A549 (cell line): ENCODE measurements at regions of chr9 and their contacts with region 1.

Region 1: GRCh38 chr9:77488439-77489126 is 159.5 kb downstream of the GNA14 start:
- DNase-seq: peak in 1 of 2 experiments; percentile 25
- ATAC-seq: peak; percentile 68 to 74; a peak in 5 of 6 replicates
- H3K4me3 ChIP-seq: no peak overlapping the region
- H3K27ac ChIP-seq: no peak overlapping the region
- H3K4me1 ChIP-seq: no peaks in the 10 kb centered on the region
- CTCF ChIP-seq: peak; percentile 50
- EP300 ChIP-seq: no peak
- POLR2A ChIP-seq: no peak
- RAD21 ChIP-seq: peak; percentile 57 to 65

Region 2: GRCh38 chr9:77498891-77499290 is 10.3 kb after region 1 on chr9:
- CTCF ChIA-PET with region 1: interaction called, 11 read pairs
- POLR2A ChIA-PET with region 1: no interaction called
- DNase-seq: no peak
- ATAC-seq: no peak
- H3K4me3 ChIP-seq: no peak overlapping the region
- H3K27ac ChIP-seq: peak overlapping the region in 1 of 2 experiments; percentile 34; a peak in 1 of 6 replicates
- H3K4me1 ChIP-seq: peaks cover 27% of the 10 kb centered on the region
- CTCF ChIP-seq: no peak
- EP300 ChIP-seq: no peak
- POLR2A ChIP-seq: no peak
- RAD21 ChIP-seq: no peak